ENCODE measurements at regions of chr11 and their contacts with region 1.

Region 1: DNA sequence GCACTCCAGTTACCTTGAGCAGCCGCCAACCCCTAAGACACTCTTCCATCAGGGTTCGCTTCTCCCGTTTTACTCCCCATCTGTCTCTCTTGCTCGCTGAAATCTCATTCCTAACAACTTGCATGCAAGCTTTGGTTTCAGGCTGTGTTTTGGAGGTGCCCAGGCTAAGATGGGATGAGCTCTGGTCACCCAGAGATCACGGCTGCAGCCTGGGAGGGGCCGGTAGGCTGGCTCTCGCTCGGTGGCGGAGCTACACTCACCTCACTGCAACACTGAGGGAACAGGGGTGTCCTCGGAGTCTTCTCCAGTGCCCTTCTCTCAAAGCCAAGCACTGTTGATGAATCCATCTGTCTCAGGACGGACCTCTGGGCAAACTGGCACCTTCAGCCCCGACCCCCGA is 197.5 kb downstream of the BARX2 start:
- DNase-seq: no peak
- ATAC-seq: no peak
- H3K4me3 ChIP-seq: no peak overlapping the region
- H3K27ac ChIP-seq: no peak overlapping the region
- H3K4me1 ChIP-seq: no peaks in the 10 kb centered on the region
- H3K27me3 ChIP-seq: peaks cover 2 to 14% of the 10 kb centered on the region in 2 experiments; a peak in 3 of 5 replicates
- CTCF ChIP-seq: no peak
- EP300 ChIP-seq: no peak
- POLR2A ChIP-seq: no peak
- RAD21 ChIP-seq: no peak

Region 2: DNA sequence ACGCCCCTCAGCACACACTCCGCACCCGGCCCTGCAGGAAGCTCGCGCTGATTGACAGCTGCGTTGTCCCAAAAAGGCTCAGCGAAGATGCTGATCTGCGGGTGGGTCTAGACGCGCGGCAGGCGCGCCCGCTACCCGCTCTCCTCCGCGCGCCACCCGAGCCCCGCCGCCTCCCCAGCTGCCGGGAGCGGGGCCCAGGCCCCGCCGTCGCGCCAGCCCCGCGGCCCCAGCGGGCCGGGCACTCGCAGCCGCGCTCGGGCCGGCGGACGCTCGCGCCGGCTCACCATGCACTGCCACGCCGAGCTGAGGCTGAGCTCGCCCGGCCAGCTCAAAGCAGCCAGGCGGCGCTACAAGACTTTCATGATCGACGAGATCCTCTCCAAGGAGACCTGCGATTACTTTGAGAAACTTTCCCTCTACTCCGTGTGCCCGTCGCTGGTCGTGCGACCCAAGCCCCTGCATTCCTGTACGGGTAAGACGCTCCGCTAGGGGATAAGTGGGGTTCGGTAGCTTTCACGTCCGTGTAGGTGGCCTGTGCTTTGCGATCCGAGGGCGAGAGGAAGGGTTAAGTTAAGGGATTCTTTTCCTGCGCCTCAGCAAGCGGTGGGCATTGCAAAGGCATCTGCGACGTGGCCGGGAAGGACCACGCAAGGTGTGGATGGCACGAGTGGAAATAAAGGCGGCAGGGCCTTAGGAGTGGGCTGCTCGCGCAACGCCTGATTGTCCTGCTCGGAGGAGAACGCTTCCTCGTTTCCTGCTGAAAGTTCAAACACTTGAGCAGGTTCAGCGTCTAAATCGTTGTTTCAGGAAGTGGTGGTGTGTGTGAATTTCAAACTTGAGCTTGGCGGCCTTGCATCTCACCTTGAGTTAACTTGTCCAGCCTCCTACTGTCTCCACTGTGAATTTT is 197.2 kb before region 1 on chr11 and contains the start of gene BARX2:
- CTCF ChIA-PET with region 1: no interaction called
- POLR2A ChIA-PET with region 1: no interaction called
- in situ Hi-C with region 1: no loop called
- intact Hi-C with region 1: loop called (anchors 2 kb)
- DNase-seq: peak; percentile 33
- ATAC-seq: peak; percentile 88
- H3K4me3 ChIP-seq: peak within 1 kb of the TSS in 2 of 3 experiments; percentile 37 to 48; a peak in 2 of 6 replicates
- H3K27ac ChIP-seq: no peak within 1 kb of the TSS
- H3K4me1 ChIP-seq: no peaks in the 10 kb centered on the region
- H3K27me3 ChIP-seq: peaks cover 10 to 82% of the 10 kb centered on the region in 2 experiments
- CTCF ChIP-seq: peak; percentile 83
- EP300 ChIP-seq: no peak
- POLR2A ChIP-seq: no peak
- RAD21 ChIP-seq: peak; percentile 64
- total RNA-seq, gene BARX2: not detected in 2 replicates

Region 3: DNA sequence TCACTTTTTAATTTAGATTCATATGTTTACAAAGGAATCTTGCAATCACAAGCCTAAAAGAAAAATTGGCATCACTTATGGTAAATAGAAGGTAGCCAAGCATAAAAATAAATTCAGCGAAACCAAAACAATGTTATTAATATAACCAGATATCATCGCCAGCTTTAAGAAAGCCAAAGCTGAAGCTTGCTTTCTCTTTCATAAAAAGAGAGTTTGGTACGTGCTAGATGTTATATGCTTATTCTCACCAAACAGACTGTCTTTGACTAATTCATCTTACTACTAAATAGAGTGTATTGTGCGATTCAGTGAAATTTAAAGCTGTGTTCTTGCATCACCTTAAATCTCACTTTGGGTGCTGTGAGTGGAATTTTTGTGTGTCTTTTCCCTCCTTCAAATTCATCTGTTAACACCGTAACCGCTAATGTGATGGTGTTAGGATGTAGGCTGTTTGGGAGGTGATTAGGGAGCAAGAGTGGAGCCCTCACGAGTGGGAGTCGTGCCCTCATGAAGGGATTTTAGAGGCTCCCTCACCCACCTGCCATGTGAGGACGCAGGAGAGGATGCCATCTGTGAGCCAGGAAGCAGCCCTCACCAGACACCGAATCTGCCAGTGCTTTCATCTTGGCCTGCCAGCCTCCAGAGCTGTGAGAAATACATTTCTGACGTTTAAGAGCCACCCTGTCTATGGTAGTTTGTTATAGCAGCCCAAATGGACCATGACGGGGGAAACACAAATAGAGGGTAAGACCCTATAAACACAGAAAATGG is 108.4 kb after region 1 on chr11:
- CTCF ChIA-PET with region 1: no interaction called
- POLR2A ChIA-PET with region 1: no interaction called
- in situ Hi-C with region 1: no loop called
- intact Hi-C with region 1: no loop called
- DNase-seq: no peak
- ATAC-seq: no peak
- H3K4me3 ChIP-seq: no peak overlapping the region
- H3K27ac ChIP-seq: no peak overlapping the region
- H3K4me1 ChIP-seq: no peaks in the 10 kb centered on the region
- H3K27me3 ChIP-seq: no peaks in the 10 kb centered on the region
- CTCF ChIP-seq: no peak
- EP300 ChIP-seq: no peak
- POLR2A ChIP-seq: no peak
- RAD21 ChIP-seq: no peak